Posterior cingulate gyrus (tissue), 11 donors: ENCODE measurements at regions of chr7 and their contacts with region 1.

Region 1: GRCh38 chr7:7566651-7567611 is at the start of gene MIOS:
- DNase-seq: peak; percentile 68 to 97 (median 82)

Region 2: DNA sequence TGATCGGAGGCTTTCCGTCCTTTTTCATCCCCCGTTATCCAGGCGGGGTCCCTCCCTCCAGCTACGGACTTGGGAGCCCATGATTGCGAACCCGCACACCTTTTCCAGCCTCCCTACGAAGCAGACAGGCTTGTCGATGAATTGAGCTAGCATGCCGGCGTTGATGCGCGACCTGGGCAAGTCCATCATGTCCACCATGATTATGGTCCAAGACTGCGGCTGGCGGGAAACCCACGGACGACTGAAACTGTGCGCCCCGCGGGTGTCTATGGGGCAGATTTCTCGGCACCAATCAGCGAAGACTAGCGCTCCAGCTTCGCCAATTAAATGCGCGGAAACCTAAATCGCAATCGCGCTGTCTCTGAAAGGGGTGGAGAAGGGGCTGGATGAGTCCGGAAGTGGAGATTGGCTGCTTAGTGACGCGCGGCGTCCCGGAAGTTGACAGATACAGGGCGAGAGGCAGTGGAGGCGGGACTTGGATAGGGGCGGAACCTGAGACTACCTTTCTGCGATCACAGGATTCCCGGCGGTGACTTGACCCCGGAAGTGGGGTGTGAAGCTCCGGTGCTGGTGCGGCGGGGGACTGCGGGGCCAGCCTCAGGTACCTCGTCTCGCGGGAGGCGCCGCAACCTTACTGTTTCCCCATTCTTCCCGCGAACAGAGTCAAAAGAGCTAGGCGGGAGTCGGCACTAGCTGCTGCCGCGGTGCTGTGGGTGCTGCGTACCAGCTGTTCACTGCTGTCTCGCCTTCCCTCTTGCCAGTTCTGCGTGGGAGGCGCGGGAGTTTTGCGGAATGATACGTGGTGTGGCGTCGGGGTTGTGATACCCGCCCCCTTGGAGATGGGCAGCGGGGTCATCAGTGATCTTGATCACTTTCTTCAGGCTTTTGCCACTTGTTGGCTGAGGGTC is 73.5 kb after region 1 on chr7 and contains the start of gene UMAD1:
- intact Hi-C with region 1: loop called (anchors 5 kb)
- DNase-seq: peak; percentile 95 to 100 (median 99)